ENCODE measurements at regions of chr2 and their contacts with region 1.

Region 1: GRCh38 chr2:119826370-119826961 is 66.7 kb downstream of the PTPN4 start:
- DNase-seq: no peak
- ATAC-seq: peak; percentile 57 to 64
- H3K4me3 ChIP-seq: no peak overlapping the region
- H3K27ac ChIP-seq: no peak overlapping the region
- H3K4me1 ChIP-seq: no peaks in the 10 kb centered on the region
- H3K27me3 ChIP-seq: no peaks in the 10 kb centered on the region

Region 2: GRCh38 chr2:119702918-119703401 is 123.5 kb before region 1 on chr2:
- intact Hi-C with region 1: loop called in 1 of 4 experiments (anchors 5 kb)
- DNase-seq: peak; percentile 46 to 78 (median 68)
- ATAC-seq: peak; percentile 86 to 91
- H3K4me3 ChIP-seq: no peak overlapping the region
- H3K27ac ChIP-seq: no peak overlapping the region
- H3K4me1 ChIP-seq: no peaks in the 10 kb centered on the region
- H3K27me3 ChIP-seq: no peaks in the 10 kb centered on the region

Region 3: GRCh38 chr2:119753041-119753929 is 73.2 kb before region 1 on chr2:
- intact Hi-C with region 1: loop called (anchors 5 to 10 kb)
- DNase-seq: no peak
- ATAC-seq: peak; percentile 64 to 66
- H3K4me3 ChIP-seq: no peak overlapping the region
- H3K27ac ChIP-seq: no peak overlapping the region
- H3K4me1 ChIP-seq: peaks cover 2% of the 10 kb centered on the region
- H3K27me3 ChIP-seq: no peaks in the 10 kb centered on the region

Region 4: DNA sequence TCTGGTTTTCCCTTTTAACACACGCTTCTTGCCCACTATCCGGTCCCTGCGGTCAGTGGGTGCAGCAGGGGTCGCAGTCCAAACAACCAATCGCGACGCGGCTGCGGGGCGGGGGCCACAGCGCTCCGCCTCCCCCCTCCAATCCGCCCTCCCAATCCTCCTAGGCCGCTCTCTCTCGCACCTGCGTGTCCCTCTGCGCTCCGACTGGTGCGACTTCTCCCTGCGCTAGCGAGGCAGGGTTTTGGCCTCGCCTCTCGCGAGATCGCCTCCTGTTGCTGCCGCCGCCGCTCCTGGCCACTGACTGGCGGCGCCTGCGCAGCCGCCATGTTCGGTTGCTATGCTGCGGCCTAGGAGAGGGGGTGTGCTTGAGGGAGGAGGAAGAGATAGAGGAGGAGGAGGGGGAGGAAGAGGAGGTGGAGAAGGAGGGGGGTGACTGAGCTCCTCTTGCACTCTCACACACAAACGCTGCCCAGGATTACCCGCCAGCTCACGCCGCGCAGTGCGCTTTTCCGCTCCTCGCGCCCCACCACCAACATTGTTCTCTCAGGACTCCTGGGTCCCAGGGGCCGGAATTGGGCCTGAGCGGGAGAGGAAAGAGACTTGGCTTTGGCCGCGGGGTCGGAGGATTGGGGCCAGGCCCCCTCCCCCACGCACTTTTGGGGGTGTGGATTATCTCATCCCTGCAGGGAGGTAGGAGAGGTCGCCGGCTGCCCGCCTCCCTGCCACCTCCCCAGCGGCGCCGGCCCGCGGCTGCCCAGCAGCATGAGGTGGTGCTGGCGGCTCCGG is 66.8 kb before region 1 on chr2 and contains the start of gene PTPN4:
- intact Hi-C with region 1: loop called (anchors 5 to 10 kb)
- DNase-seq: peak; percentile 97 to 99 (median 99)
- ATAC-seq: peak; percentile 99
- H3K4me3 ChIP-seq: peak within 1 kb of the TSS; percentile 97
- H3K27ac ChIP-seq: peak within 1 kb of the TSS; percentile 98
- H3K4me1 ChIP-seq: no peaks in the 10 kb centered on the region
- H3K27me3 ChIP-seq: no peaks in the 10 kb centered on the region
- total RNA-seq, gene PTPN4: 28.4 to 42.6 (median 38.7) TPM

Region 5: DNA sequence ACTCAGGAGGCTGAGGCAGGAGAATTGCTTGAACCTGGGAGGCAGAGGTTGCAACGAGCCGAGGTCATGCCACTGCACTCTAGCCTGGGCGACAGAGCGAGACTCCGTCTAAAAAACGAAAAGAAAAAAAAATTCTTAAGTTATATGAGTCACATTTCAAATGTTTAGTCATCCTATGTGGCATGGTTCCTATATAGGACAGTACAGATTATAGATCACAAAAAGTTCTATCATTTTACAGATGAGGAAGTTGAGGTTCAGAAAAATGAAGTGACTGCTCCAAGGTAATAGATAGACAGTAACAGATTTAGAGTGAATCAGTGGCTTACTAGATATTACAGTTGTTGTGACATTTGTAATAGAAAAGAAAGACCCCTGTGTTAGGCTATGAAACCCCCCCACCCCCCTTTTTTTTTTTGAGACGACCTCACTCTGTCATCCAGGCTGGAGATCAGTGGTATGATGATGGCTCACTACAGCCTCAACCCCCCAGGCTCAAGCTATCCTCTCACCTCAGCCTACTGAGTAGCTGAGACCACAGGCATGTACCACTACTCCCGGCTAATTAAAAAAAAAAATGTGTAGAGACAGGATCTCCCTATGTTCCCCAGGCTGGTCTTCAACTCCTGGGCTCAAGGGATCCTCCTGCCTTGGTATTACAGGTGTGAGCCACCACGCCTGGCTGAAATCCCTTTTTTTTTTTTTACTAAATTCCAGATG is 44.0 kb before region 1 on chr2:
- intact Hi-C with region 1: no loop called
- DNase-seq: no peak
- ATAC-seq: no peak
- H3K4me3 ChIP-seq: no peak overlapping the region
- H3K27ac ChIP-seq: no peak overlapping the region
- H3K4me1 ChIP-seq: peaks cover 1% of the 10 kb centered on the region
- H3K27me3 ChIP-seq: no peaks in the 10 kb centered on the region

Region 6: GRCh38 chr2:119879502-119879901 is 53.0 kb after region 1 on chr2:
- intact Hi-C with region 1: no loop called
- DNase-seq: no peak
- ATAC-seq: no peak
- H3K4me3 ChIP-seq: no peak overlapping the region
- H3K27ac ChIP-seq: no peak overlapping the region
- H3K4me1 ChIP-seq: no peaks in the 10 kb centered on the region
- H3K27me3 ChIP-seq: no peaks in the 10 kb centered on the region

Region 7: GRCh38 chr2:119897736-119898395 is 71.4 kb after region 1 on chr2:
- intact Hi-C with region 1: no loop called
- DNase-seq: no peak
- ATAC-seq: no peak
- H3K4me3 ChIP-seq: no peak overlapping the region
- H3K27ac ChIP-seq: no peak overlapping the region
- H3K4me1 ChIP-seq: no peaks in the 10 kb centered on the region
- H3K27me3 ChIP-seq: no peaks in the 10 kb centered on the region

Region 8: GRCh38 chr2:120005834-120006521 is 179.5 kb after region 1 on chr2:
- intact Hi-C with region 1: no loop called
- DNase-seq: no peak
- ATAC-seq: no peak
- H3K4me3 ChIP-seq: no peak overlapping the region
- H3K27ac ChIP-seq: no peak overlapping the region
- H3K4me1 ChIP-seq: no peaks in the 10 kb centered on the region
- H3K27me3 ChIP-seq: no peaks in the 10 kb centered on the region

Measured in right cardiac atrium (tissue), 5 donors.